ENCODE measurements at regions of chr12 and their contacts with region 1.

Region 1: DNA sequence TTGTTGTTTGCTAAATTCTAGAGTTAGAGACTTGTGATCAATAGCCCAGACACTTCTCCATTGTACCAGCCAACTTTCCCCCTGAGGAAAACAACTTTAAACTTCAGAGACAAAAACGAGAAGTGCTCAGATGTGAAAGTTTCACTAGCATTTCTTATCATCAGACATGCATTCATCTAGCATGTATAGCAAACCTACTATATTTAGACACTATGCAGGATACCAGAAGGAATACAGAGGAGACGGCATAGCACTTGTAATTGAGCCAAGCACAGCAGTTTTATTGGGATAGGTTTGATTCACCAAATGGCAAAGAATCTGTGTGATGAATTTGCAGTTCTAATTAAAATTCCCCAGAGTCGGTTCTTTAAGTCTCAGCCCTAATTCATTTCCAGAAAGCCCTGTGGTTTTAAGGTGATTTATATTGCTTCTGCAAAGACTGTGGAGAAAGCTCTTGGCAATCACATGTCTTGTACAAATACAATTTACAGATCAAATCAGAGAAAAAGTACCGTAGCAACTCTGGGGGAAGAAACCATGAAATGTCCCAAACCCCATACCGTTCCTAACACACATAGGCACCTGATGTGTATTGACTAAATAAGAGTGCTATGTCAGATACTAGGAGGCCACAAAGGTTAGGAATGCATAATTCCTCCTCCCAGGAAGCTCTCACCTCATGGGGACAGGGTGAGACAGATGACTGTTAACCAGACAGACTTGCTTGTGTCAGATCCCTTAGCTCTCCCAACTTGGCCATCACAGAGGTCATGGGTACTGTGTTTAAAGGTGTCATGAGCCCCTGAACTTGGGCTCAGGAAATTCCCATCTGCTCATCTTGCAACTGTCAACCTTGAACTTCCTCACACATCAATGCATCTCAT is 69.6 kb upstream of the KRAS start:
- DNase-seq: no peak
- ATAC-seq: no peak
- H3K4me3 ChIP-seq: no peak overlapping the region
- H3K4me3 Mint-ChIP-seq: peak overlapping the region in 5 of 10 donors; percentile 8 to 79 (median 49)
- H3K27ac ChIP-seq: no peak overlapping the region
- H3K27ac Mint-ChIP-seq: peak overlapping the region in 8 of 9 donors; percentile 23 to 96 (median 72)
- H3K4me1 ChIP-seq: peaks cover 19 to 44% of the 10 kb centered on the region in 2 donors
- H3K4me1 Mint-ChIP-seq: peaks cover 33 to 50% (median 49%) of the 10 kb centered on the region in 7 donors
- H3K27me3 ChIP-seq: no peaks in the 10 kb centered on the region
- H3K27me3 Mint-ChIP-seq: peaks cover 0 to 6% (median 0%) of the 10 kb centered on the region in 5 donors

Region 2: GRCh38 chr12:25250744-25251730 is 69.3 kb before region 1 on chr12 and contains the start of gene KRAS:
- CTCF ChIA-PET with region 1: interaction called, 3 read pairs
- POLR2A ChIA-PET with region 1: interaction called, 21 read pairs
- intact Hi-C with region 1: loop called (anchors 2 kb)
- DNase-seq: peak; percentile 83 to 90 (median 90)
- ATAC-seq: peak; percentile 96
- H3K4me3 ChIP-seq: peak within 1 kb of the TSS; percentile 64
- H3K4me3 Mint-ChIP-seq: peak within 1 kb of the TSS; percentile 84 to 97 (median 94)
- H3K27ac ChIP-seq: peak within 1 kb of the TSS; percentile 91
- H3K27ac Mint-ChIP-seq: peak within 1 kb of the TSS; percentile 84 to 96 (median 94)
- H3K4me1 ChIP-seq: peaks cover 0 to 5% of the 10 kb centered on the region in 2 donors
- H3K4me1 Mint-ChIP-seq: peaks cover 16 to 51% (median 44%) of the 10 kb centered on the region in 7 donors
- H3K27me3 ChIP-seq: no peaks in the 10 kb centered on the region
- H3K27me3 Mint-ChIP-seq: peaks cover 0 to 20% (median 0%) of the 10 kb centered on the region in 5 donors
- total RNA-seq, gene KRAS: 33.1 to 39.9 (median 35.7) TPM

Region 3: DNA sequence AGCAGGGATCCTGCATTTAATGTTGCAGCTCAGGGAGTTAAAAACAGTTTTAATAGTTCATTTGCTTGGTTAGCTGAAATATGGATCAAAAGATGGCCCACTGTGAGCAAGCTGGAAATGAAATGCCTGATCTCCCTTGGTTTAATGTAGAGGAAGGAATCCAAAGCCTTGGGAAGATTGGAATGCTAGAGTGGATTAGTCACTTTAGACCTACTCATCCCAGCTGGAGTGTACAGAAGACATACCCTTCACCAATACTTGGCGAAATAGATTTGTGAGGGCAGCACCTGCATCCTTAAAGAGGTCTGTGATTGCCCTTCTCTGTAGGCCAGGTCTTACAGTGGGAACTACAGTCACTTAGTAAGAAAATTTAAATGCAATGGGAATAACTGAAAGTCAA is 11.6 kb before region 1 on chr12:
- CTCF ChIA-PET with region 1: no interaction called
- POLR2A ChIA-PET with region 1: interaction called, 10 read pairs
- intact Hi-C with region 1: no loop called
- DNase-seq: no peak
- ATAC-seq: no peak
- H3K4me3 ChIP-seq: no peak overlapping the region
- H3K4me3 Mint-ChIP-seq: no peak overlapping the region
- H3K27ac ChIP-seq: no peak overlapping the region
- H3K27ac Mint-ChIP-seq: no peak overlapping the region
- H3K4me1 ChIP-seq: no peaks in the 10 kb centered on the region
- H3K4me1 Mint-ChIP-seq: peaks cover 0 to 4% (median 0%) of the 10 kb centered on the region in 7 donors
- H3K27me3 ChIP-seq: no peaks in the 10 kb centered on the region
- H3K27me3 Mint-ChIP-seq: peaks cover 0 to 33% (median 0%) of the 10 kb centered on the region in 5 donors

Region 4: GRCh38 chr12:25364529-25365339 is 44.4 kb after region 1 on chr12:
- CTCF ChIA-PET with region 1: no interaction called
- POLR2A ChIA-PET with region 1: interaction called, 4 read pairs
- intact Hi-C with region 1: loop called in 1 of 2 experiments (anchors 2 kb)
- DNase-seq: peak in 2 of 9 donors; percentile 22 to 27
- ATAC-seq: peak; percentile 55
- H3K4me3 ChIP-seq: no peak overlapping the region
- H3K4me3 Mint-ChIP-seq: peak overlapping the region; percentile 0 to 83 (median 64)
- H3K27ac ChIP-seq: no peak overlapping the region
- H3K27ac Mint-ChIP-seq: peak overlapping the region; percentile 5 to 82 (median 61)
- H3K4me1 ChIP-seq: peaks cover 0 to 8% of the 10 kb centered on the region in 2 donors
- H3K4me1 Mint-ChIP-seq: peaks cover 0 to 18% (median 15%) of the 10 kb centered on the region in 7 donors
- H3K27me3 ChIP-seq: no peaks in the 10 kb centered on the region
- H3K27me3 Mint-ChIP-seq: peaks cover 0 to 4% (median 0%) of the 10 kb centered on the region in 5 donors

Region 5: DNA sequence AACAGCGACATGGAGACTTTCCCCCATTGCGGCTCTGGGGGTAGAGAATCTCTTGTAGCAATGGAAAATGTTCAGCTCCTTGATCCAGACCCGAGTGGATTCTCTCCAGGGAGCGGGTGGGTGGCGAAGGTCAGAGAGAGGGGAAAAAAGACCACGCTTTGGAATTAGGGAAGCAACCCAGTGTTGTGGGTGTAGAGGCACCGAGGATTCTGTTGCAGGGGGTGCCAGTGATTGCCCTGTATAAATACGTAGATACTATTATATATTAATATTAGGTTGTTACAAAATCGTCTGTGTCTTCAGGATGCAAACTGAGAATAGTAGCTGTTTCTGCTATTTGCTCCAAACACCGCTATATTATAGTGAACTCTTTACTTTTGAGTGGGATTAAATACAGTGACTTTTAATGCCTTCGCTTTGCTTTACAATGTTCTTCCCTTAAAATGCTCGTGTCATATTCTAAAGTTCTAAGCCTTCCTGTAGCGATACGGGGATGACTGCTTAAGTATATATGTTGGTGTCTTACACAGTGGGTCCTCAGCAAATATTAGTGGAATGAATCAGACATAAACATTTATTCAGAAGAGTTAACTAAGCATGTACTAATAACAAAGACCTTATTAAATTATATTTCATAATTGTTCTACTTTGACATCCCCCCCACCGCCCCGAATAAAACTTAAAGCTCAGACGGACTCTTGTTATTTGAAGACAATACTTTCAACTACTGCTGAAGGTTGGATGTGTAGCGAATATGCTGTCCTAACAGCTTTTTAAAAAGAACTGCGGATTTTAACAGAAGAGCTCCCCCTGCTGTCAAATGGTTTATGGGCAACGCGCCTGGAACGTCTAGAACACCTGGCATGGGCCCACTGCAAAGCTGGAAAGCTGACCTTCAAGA is 66.7 kb after region 1 on chr12:
- CTCF ChIA-PET with region 1: interaction called, 6 read pairs
- POLR2A ChIA-PET with region 1: interaction called, 4 read pairs
- intact Hi-C with region 1: loop called in 1 of 2 experiments (anchors 1 kb)
- DNase-seq: peak; percentile 48 to 86 (median 83)
- ATAC-seq: peak; percentile 18
- H3K4me3 ChIP-seq: peak overlapping the region; percentile 97
- H3K4me3 Mint-ChIP-seq: peak overlapping the region; percentile 90 to 100 (median 96)
- H3K27ac ChIP-seq: peak overlapping the region; percentile 98
- H3K27ac Mint-ChIP-seq: peak overlapping the region; percentile 91 to 100 (median 100)
- H3K4me1 ChIP-seq: peaks cover 19 to 24% of the 10 kb centered on the region in 2 donors
- H3K4me1 Mint-ChIP-seq: peaks cover 13 to 61% (median 35%) of the 10 kb centered on the region in 7 donors
- H3K27me3 ChIP-seq: no peaks in the 10 kb centered on the region
- H3K27me3 Mint-ChIP-seq: peaks cover 0 to 2% (median 0%) of the 10 kb centered on the region in 5 donors

Region 6: DNA sequence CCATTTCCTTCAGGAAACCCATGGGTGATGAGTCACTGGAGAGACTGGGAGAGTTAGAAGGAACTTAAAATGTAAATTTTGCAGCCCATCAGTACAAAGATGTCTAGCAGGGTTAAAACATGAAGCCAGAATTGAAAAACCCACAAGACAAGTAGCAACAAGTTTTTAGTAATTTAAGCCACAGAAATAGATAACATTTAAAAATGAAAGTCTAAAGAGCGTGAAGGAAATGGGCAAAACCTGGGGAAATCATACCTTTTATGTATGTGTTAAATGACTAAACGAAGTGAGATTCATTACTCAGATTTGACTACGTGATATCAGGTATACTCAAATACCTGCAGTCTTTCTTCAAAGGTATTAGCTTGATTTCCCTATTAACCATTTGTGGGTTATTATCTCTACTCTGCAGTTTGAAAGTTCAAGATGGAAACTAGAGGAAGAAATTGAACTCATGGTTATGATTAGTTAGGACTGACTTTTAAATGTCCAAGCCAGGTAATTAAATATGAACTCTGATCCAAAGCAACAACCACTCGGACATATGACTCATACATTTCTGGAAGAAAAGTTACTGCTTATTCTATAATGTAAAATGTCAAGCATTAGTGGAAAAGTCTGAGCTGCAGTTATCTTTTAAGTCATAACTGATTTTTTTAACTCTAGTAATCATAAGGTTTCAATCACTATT is 1428.5 kb after region 1 on chr12:
- CTCF ChIA-PET with region 1: no interaction called
- POLR2A ChIA-PET with region 1: no interaction called
- intact Hi-C with region 1: no loop called
- DNase-seq: no peak
- ATAC-seq: no peak
- H3K4me3 ChIP-seq: no peak overlapping the region
- H3K4me3 Mint-ChIP-seq: peak overlapping the region in 5 of 10 donors; percentile 0 to 67 (median 26)
- H3K27ac ChIP-seq: no peak overlapping the region
- H3K27ac Mint-ChIP-seq: peak overlapping the region in 3 of 9 donors; percentile 48 to 65 (median 59)
- H3K4me1 ChIP-seq: peaks cover 11% of the 10 kb centered on the region in 2 donors
- H3K4me1 Mint-ChIP-seq: peaks cover 35 to 85% (median 67%) of the 10 kb centered on the region in 7 donors
- H3K27me3 ChIP-seq: no peaks in the 10 kb centered on the region
- H3K27me3 Mint-ChIP-seq: no peaks in the 10 kb centered on the region